ENCODE measurements at regions of chr16 and their contacts with region 1.

Region 1: GRCh38 chr16:87778830-87779579 is 13.2 kb upstream of the KLHDC4 start:
- DNase-seq: peak; percentile 82
- H3K4me3 ChIP-seq: no peak overlapping the region
- CTCF ChIP-seq: peak; percentile 98

Region 2: GRCh38 chr16:87790278-87791032 is 11.4 kb after region 1 on chr16:
- CTCF ChIA-PET with region 1: interaction called, 85 read pairs
- POLR2A ChIA-PET with region 1: no interaction called
- DNase-seq: no peak
- H3K4me3 ChIP-seq: no peak overlapping the region
- CTCF ChIP-seq: no peak

Region 3: DNA sequence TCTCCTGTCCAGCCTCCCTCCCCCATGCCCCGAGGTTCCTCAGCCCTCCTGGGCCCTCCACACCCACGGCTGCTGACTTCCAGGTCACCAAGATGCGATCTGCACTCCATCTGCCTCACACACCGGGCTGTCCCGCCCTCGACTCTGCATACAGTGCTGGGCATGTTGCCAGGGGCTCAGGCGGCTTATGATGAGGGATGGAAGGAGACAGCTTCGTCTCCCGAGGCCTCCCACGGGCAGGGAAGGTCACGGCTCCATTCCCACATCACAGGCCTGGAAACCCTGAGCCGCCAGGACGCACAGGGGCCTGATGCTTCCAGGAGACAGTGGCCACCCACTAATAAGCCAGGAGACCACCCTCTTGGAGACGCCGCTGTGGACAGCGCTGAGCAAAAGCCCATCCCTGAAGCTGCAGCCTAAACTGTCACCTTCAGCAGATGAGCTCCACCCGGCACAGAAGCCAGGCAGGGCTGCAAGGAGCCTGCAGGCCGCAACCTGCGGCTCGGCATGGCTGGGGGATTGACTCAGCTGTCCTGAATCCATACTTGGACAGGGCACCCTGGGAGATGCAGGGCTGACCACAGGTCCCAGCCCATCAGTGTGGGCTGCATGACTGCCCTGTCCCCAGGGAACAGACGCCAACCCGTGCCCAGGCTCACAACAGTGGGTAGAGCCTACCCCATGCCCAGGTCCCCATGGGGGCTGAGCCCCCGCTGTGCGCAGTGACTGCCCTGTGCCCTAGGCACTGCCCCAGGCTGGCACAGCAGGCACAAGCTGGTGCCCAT is 55.8 kb after region 1 on chr16:
- CTCF ChIA-PET with region 1: interaction called, 11 read pairs
- POLR2A ChIA-PET with region 1: interaction called, 3 read pairs
- DNase-seq: no peak
- H3K4me3 ChIP-seq: no peak overlapping the region
- CTCF ChIP-seq: no peak

Region 4: DNA sequence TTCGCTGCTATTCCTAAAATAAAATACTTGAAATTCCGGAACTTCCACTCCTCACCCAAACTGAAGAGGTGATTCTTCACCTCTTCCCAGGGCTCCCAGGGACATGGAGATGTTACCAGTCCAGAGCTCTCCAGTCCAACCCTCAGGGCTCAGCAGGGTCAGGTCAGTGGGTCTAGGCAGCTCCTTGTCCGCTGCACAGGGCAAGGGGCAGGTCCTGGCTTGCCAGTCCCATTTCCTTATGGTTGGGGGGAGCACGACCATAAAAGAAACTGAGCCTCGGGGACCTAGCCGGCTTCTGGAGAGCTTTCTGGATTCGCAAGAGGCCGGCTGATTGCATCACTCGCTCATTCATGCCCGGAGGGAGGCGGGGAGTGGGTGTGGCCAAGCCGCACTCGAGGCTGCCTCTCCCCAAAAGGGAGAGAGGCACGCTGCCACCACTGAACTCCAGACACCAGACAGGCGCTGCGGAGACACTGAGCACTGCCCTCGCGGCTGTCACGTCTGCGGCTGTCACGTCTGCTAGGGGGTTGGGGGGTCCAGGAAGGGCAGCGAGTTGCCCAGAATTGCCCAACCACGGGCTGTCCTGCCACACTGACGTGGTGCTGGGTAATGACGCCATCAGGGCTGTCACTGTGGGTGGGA is 74.5 kb after region 1 on chr16:
- CTCF ChIA-PET with region 1: interaction called, 59 read pairs
- POLR2A ChIA-PET with region 1: interaction called, 6 read pairs
- DNase-seq: peak; percentile 65
- H3K4me3 ChIP-seq: peak overlapping the region; percentile 38
- CTCF ChIP-seq: no peak

Region 5: GRCh38 chr16:87877938-87878507 is 99.0 kb after region 1 on chr16:
- CTCF ChIA-PET with region 1: interaction called, 257 read pairs
- POLR2A ChIA-PET with region 1: no interaction called
- DNase-seq: no peak
- H3K4me3 ChIP-seq: no peak overlapping the region
- CTCF ChIP-seq: peak; percentile 3

Region 6: DNA sequence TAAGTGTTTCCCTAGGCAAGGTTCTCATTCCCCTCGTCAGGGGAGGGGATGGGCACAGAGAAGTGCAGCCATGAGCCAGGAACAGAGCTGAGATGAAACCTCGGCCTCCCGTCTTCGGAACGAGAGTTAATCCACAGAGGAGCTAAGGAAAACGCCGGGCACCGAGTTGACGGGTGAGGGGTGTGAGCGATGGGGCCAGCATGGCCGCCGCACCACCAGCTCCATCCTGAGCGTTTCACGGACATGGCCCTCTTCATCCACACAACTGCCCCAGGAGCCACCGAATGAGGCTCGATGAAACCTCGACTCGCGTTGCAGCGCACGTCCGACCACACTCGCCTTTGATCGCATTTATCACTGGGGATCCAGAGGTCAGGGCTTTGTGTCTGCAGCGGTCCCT is 135.8 kb after region 1 on chr16:
- CTCF ChIA-PET with region 1: interaction called, 20 read pairs
- POLR2A ChIA-PET with region 1: no interaction called
- DNase-seq: no peak
- H3K4me3 ChIP-seq: no peak overlapping the region
- CTCF ChIP-seq: no peak